B cell (primary cell): ENCODE measurements at regions of chr6 and their contacts with region 1.

Region 1: GRCh38 chr6:34196126-34196830 is 40.4 kb upstream of the HMGA1 start:
- DNase-seq: peak; percentile 92
- ATAC-seq: peak; percentile 98
- H3K4me3 ChIP-seq: peak overlapping the region; percentile 21 to 83 (median 70)
- H3K4me3 Mint-ChIP-seq: peak overlapping the region; percentile 86
- H3K27ac ChIP-seq: peak overlapping the region in 1 of 2 donors; percentile 52
- H3K27ac Mint-ChIP-seq: peak overlapping the region; percentile 77
- H3K4me1 ChIP-seq: peaks cover 7 to 12% of the 10 kb centered on the region in 2 donors
- H3K4me1 Mint-ChIP-seq: peaks cover 12% of the 10 kb centered on the region
- H3K27me3 ChIP-seq: no peaks in the 10 kb centered on the region
- H3K27me3 Mint-ChIP-seq: no peaks in the 10 kb centered on the region
- CTCF ChIP-seq: peak; percentile 94

Region 2: GRCh38 chr6:34074064-34074742 is 122.1 kb before region 1 on chr6:
- CTCF ChIA-PET with region 1: no interaction called
- POLR2A ChIA-PET with region 1: no interaction called
- intact Hi-C with region 1: no loop called
- DNase-seq: no peak
- ATAC-seq: no peak
- H3K4me3 ChIP-seq: no peak overlapping the region
- H3K4me3 Mint-ChIP-seq: no peak overlapping the region
- H3K27ac ChIP-seq: no peak overlapping the region
- H3K27ac Mint-ChIP-seq: no peak overlapping the region
- H3K4me1 ChIP-seq: no peaks in the 10 kb centered on the region
- H3K4me1 Mint-ChIP-seq: no peaks in the 10 kb centered on the region
- H3K27me3 ChIP-seq: no peaks in the 10 kb centered on the region
- H3K27me3 Mint-ChIP-seq: peaks cover 6% of the 10 kb centered on the region
- CTCF ChIP-seq: no peak

Region 3: GRCh38 chr6:34143884-34144580 is 52.2 kb before region 1 on chr6:
- CTCF ChIA-PET with region 1: no interaction called
- POLR2A ChIA-PET with region 1: interaction called, 20 read pairs
- intact Hi-C with region 1: no loop called
- DNase-seq: peak; percentile 66
- ATAC-seq: peak; percentile 63
- H3K4me3 ChIP-seq: peak overlapping the region in 3 of 5 experiments; percentile 50 to 62 (median 54)
- H3K4me3 Mint-ChIP-seq: peak overlapping the region; percentile 66
- H3K27ac ChIP-seq: no peak overlapping the region
- H3K27ac Mint-ChIP-seq: no peak overlapping the region
- H3K4me1 ChIP-seq: peaks cover 35 to 45% of the 10 kb centered on the region in 2 donors
- H3K4me1 Mint-ChIP-seq: peaks cover 25% of the 10 kb centered on the region
- H3K27me3 ChIP-seq: peaks cover 0 to 75% (median 42%) of the 10 kb centered on the region in 4 experiments
- H3K27me3 Mint-ChIP-seq: peaks cover 63% of the 10 kb centered on the region
- CTCF ChIP-seq: peak; percentile 43

Region 4: DNA sequence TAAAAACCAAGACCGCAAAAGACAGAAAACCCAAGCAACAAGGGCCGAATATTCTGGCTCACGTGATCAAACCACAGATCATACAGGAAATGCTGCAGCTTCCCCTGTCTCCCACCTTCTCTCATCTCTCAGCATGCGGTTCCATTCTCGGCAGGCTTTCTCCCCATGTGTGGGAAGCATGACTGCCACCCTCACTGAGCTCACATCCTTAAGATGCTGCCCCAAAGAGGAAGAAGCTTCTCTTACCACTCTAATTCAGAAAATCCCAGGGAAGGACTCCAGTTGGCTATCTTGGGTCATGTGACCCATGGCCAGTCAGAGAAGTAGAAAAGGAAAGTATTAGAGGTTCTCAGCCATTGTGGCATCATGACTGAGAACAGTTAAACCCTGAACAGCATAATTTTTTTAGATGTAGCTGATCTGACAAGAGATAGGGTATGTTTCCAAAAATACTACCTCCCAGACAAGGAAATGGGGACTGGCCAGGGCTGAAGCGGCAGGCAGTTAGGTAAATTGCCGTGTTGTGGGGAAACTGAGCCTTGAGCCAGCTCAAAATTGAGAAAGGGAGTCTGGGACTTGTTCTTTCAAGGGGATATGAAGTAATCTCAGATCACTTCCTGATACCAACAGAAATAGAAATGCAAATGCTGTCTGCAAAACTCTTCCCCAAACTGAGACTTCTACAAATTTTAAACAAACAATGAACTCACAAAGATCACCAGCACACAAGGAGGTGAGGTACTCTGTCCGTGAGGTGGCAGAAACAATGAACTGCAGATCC is 13.3 kb before region 1 on chr6:
- CTCF ChIA-PET with region 1: interaction called, 22 read pairs
- POLR2A ChIA-PET with region 1: interaction called, 6 read pairs
- intact Hi-C with region 1: no loop called
- DNase-seq: peak; percentile 78
- ATAC-seq: peak; percentile 76
- H3K4me3 ChIP-seq: peak overlapping the region in 4 of 5 experiments; percentile 25 to 50 (median 42)
- H3K4me3 Mint-ChIP-seq: peak overlapping the region; percentile 82
- H3K27ac ChIP-seq: peak overlapping the region; percentile 92 to 95
- H3K27ac Mint-ChIP-seq: peak overlapping the region; percentile 92
- H3K4me1 ChIP-seq: peaks cover 22 to 25% of the 10 kb centered on the region in 2 donors
- H3K4me1 Mint-ChIP-seq: peaks cover 24% of the 10 kb centered on the region
- H3K27me3 ChIP-seq: no peaks in the 10 kb centered on the region
- H3K27me3 Mint-ChIP-seq: no peaks in the 10 kb centered on the region
- CTCF ChIP-seq: no peak

Region 5: DNA sequence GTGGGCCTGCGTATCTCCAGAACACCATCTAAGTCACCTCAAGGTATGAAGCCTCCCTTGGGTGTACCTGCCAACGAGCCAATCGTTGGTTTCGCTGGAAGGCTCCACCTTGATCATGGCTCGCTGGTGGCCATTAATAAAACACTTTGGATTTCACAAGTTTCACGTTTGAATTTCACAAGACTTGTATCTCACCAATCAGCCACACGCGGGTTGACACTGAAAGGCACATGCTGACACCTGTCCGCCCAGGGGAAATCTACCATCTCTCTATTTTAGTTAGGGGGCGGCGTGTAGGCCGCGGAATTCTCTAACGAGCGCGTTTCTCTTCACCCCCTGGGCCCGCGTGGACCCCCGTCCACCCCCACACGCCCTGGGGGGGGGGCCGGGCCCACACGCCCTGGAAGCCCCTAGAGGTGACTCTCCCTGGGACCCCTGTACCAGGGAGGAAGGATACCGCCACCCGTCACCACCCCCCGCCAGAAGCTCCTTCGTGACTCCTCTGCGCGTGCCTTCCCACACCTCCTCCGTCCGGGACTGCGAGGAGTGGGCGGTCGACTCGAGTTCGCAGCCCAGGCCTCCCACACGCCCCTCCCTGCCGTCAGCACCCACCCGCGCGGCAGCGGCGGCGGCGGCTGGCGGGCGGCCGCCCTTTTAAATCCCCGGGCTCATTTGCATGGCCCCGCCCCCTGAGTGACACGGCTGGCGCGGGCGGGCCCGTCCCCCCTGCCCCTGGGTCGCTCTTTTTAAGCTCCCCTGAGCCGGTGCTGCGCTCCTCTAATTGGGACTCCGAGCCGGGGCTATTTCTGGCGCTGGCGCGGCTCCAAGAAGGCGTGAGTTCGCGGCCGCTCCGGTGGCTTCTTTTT is 40.1 kb after region 1 on chr6 and contains the start of gene HMGA1:
- CTCF ChIA-PET with region 1: interaction called, 10 read pairs
- POLR2A ChIA-PET with region 1: interaction called, 12 read pairs
- intact Hi-C with region 1: loop called (anchors 1 kb)
- DNase-seq: peak; percentile 96
- ATAC-seq: peak; percentile 76
- H3K4me3 ChIP-seq: peak within 1 kb of the TSS; percentile 64 to 93 (median 88)
- H3K4me3 Mint-ChIP-seq: peak within 1 kb of the TSS; percentile 92
- H3K27ac ChIP-seq: peak within 1 kb of the TSS; percentile 96 to 98
- H3K27ac Mint-ChIP-seq: peak within 1 kb of the TSS; percentile 98
- H3K4me1 ChIP-seq: peaks cover 22 to 30% of the 10 kb centered on the region in 2 donors
- H3K4me1 Mint-ChIP-seq: peaks cover 34% of the 10 kb centered on the region
- H3K27me3 ChIP-seq: no peaks in the 10 kb centered on the region
- H3K27me3 Mint-ChIP-seq: no peaks in the 10 kb centered on the region
- CTCF ChIP-seq: no peak
- total RNA-seq, gene HMGA1: 66.4 and 72.3 TPM in 2 replicates

Region 6: DNA sequence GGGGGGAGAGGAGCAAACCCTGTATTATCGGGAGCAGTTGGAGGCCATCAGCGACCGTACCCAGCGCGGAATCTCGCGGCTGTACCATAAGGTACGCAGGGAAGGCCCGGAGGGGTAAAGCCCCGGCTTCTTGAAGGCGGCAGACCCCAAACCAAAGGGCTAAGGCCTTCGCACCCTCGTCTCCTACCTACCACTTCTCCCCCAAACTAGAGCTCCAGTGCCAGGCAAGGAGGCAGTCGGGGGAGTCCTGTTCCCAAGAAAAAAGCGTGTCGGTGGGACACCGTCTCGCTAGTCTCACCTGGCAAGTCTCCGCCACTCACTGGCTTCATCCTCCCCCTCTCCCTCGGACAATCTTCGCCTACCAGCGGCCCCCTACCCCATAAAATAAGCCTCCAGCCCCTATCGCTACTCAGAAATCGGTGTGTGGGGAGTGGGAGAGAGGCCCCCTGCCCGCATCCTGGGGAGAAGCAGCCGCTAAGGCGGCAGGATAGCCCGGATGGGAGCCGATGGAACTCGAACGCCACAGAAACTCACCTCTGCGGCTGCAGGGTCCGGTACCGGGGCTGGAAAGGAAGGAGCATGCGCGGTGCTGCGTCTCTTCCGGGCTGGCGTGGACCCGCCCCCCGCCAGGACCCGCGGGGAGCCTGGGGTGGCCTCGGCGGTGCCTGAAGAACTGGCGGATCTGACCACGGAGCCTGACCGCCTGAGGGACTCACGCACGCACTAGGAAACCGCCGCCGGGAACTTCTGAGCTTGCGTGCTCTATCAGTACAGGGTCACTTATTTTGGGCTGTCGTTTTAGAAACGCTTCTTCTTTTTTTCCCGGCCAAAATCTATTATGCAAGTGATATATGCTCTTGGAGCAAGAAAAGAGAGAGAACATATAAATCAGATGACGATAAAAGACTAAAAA is 229.5 kb after region 1 on chr6 and contains the start of gene RPS10:
- CTCF ChIA-PET with region 1: interaction called, 11 read pairs
- POLR2A ChIA-PET with region 1: no interaction called
- intact Hi-C with region 1: no loop called
- DNase-seq: peak; percentile 94
- ATAC-seq: peak; percentile 99
- H3K4me3 ChIP-seq: peak within 1 kb of the TSS; percentile 80 to 94 (median 90)
- H3K4me3 Mint-ChIP-seq: peak within 1 kb of the TSS; percentile 86
- H3K27ac ChIP-seq: peak within 1 kb of the TSS; percentile 77 to 82
- H3K27ac Mint-ChIP-seq: peak within 1 kb of the TSS; percentile 95
- H3K4me1 ChIP-seq: peaks cover 10 to 23% of the 10 kb centered on the region in 2 donors
- H3K4me1 Mint-ChIP-seq: peaks cover 21% of the 10 kb centered on the region
- H3K27me3 ChIP-seq: no peaks in the 10 kb centered on the region
- H3K27me3 Mint-ChIP-seq: no peaks in the 10 kb centered on the region
- CTCF ChIP-seq: no peak
- total RNA-seq, gene RPS10: 2,661 and 2,707 TPM in 2 replicates